ENCODE measurements at regions of chr6 and their contacts with region 1.

Region 1: GRCh38 chr6:4775584-4776494 is at the start of gene CDYL:
- DNase-seq: peak; percentile 82
- H3K4me3 ChIP-seq: peak within 1 kb of the TSS; percentile 51 to 90 (median 64)
- H3K27ac ChIP-seq: no peak within 1 kb of the TSS
- H3K4me1 ChIP-seq: peaks cover 12% of the 10 kb centered on the region
- H3K27me3 ChIP-seq: peaks cover 30 to 33% of the 10 kb centered on the region in 2 experiments
- CTCF ChIP-seq: peak in 1 of 2 donors; percentile 23
- POLR2A ChIP-seq: no peak
- total RNA-seq, gene CDYL: 34.1 and 35.6 TPM in 2 replicates

Region 2: DNA sequence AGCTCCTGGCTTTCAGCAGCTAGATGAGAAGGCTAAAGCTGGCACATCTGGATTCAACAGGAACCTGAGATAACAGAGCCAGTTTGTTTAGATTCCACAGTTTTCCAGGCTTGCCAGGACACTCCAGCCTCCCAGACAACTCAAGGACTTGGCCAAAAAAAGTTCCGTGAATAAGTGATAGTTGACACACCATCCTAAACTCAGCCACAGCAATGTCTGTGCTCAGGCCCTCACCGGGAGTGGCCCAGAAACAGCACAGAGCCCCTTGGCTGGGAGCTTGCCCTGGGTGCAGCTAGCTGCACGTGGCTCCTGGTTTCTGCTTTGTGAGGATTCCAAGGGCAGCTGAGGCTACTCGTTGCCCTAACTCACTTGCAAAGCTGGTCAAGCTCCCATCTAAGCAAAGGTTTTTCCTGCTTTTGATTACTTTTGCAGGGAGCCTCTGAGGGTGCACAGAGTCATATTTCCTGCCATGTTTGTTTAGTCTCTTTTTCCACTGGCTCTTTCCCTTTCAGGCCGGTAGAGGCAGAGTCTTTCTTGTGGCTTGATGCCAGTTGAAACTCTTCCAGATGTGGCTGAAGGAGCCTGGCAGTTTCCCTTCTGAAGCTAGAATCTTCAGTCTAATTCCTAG is 522.1 kb before region 1 on chr6:
- CTCF ChIA-PET with region 1: interaction called, 4 read pairs
- POLR2A ChIA-PET with region 1: no interaction called
- dilution Hi-C with region 1: no loop called
- intact Hi-C with region 1: loop called (anchors 2 kb)
- DNase-seq: peak; percentile 96
- H3K4me3 ChIP-seq: no peak overlapping the region
- H3K27ac ChIP-seq: peak overlapping the region; percentile 60
- H3K4me1 ChIP-seq: peaks cover 50% of the 10 kb centered on the region
- H3K27me3 ChIP-seq: no peaks in the 10 kb centered on the region
- CTCF ChIP-seq: peak; percentile 72 to 75
- POLR2A ChIP-seq: peak; percentile 25

Region 3: DNA sequence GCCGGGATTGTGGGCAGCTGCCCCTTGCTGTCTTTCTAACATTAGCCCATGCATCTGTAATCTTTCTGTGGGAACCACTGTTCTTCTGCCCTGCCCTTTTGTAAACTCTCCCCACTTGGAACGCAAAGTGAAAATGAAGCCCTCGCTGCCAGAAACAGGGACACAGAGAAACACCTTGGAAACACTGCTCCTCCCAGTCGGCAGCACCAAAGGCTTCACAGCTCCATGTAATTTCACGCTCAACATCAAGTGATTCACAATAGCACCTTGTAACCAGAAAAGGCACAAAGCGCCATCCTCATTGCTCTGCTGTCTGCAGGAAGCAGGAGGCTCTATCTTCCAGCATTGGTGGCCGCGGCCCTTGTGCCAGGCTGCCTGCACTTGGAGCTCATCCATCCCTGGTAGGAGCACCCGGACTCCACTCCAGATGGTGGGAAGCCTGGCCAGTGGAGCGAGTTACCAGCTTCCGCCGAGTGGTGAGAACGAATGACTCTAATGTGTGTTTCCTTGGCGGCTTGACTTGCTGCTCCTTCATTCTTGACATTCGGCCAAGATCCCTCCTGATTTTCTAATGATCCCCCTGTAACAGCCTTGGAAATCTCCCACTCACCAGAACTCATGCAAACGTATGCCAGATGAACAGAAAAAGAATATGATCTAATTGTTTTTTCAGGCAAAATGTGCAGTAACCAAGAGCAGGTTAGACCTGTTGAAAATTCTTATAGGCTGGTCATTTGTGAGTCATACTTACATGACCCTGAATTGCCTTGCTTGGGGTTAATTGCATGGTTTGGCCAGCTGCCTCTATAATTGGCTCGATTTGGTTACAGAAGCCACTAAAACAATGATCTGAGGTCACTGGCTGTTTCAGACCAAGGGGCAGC is 168.8 kb before region 1 on chr6:
- CTCF ChIA-PET with region 1: interaction called, 3 read pairs
- POLR2A ChIA-PET with region 1: no interaction called
- dilution Hi-C with region 1: no loop called
- intact Hi-C with region 1: loop called (anchors 1 kb)
- DNase-seq: peak; percentile 91
- H3K4me3 ChIP-seq: no peak overlapping the region
- H3K27ac ChIP-seq: peak overlapping the region; percentile 83
- H3K4me1 ChIP-seq: peaks cover 30% of the 10 kb centered on the region
- H3K27me3 ChIP-seq: no peaks in the 10 kb centered on the region
- CTCF ChIP-seq: no peak
- POLR2A ChIP-seq: no peak

Region 4: GRCh38 chr6:4732691-4733315 is 43.0 kb before region 1 on chr6:
- CTCF ChIA-PET with region 1: no interaction called
- POLR2A ChIA-PET with region 1: no interaction called
- dilution Hi-C with region 1: no loop called
- intact Hi-C with region 1: loop called (anchors 2 kb)
- DNase-seq: peak; percentile 85
- H3K4me3 ChIP-seq: peak overlapping the region in 1 of 3 experiments; percentile 1
- H3K27ac ChIP-seq: no peak overlapping the region
- H3K4me1 ChIP-seq: peaks cover 11% of the 10 kb centered on the region
- H3K27me3 ChIP-seq: peaks cover 5 to 8% of the 10 kb centered on the region in 2 experiments
- CTCF ChIP-seq: no peak
- POLR2A ChIP-seq: no peak

Region 5: GRCh38 chr6:4743062-4743461 is 32.8 kb before region 1 on chr6:
- CTCF ChIA-PET with region 1: no interaction called
- POLR2A ChIA-PET with region 1: no interaction called
- dilution Hi-C with region 1: no loop called
- intact Hi-C with region 1: no loop called
- DNase-seq: no peak
- H3K4me3 ChIP-seq: no peak overlapping the region
- H3K27ac ChIP-seq: no peak overlapping the region
- H3K4me1 ChIP-seq: no peaks in the 10 kb centered on the region
- H3K27me3 ChIP-seq: peaks cover 4 to 9% of the 10 kb centered on the region in 2 experiments
- CTCF ChIP-seq: no peak
- POLR2A ChIP-seq: no peak

Region 6: DNA sequence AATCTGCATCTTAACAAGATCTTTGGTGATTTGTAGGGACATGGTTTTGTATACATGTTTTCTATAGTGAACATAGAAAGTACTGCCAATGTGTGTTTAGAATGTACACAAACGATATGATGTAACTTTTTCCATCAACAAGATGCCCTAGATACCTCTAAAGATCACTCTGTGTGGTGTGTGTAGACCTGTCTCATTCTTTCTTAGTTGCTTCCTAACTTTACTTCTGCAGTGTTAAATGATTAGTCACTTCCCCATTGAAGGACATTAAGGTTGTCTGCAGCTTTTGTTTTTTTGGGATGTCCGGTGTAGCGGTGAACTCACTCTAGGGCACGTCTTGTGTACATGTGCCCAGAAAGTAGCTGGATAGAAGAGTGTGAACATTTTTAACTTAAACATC is 36.2 kb after region 1 on chr6:
- CTCF ChIA-PET with region 1: interaction called, 3 read pairs
- POLR2A ChIA-PET with region 1: interaction called, 4 read pairs
- dilution Hi-C with region 1: no loop called
- intact Hi-C with region 1: loop called (anchors 1 kb)
- DNase-seq: peak; percentile 92
- H3K4me3 ChIP-seq: no peak overlapping the region
- H3K27ac ChIP-seq: peak overlapping the region; percentile 95
- H3K4me1 ChIP-seq: peaks cover 33% of the 10 kb centered on the region
- H3K27me3 ChIP-seq: no peaks in the 10 kb centered on the region
- CTCF ChIP-seq: no peak
- POLR2A ChIP-seq: peak; percentile 46

Region 7: GRCh38 chr6:4936681-4937041 is 160.8 kb after region 1 on chr6:
- CTCF ChIA-PET with region 1: no interaction called
- POLR2A ChIA-PET with region 1: no interaction called
- dilution Hi-C with region 1: no loop called
- intact Hi-C with region 1: loop called (anchors 1 kb)
- DNase-seq: peak; percentile 67
- H3K4me3 ChIP-seq: no peak overlapping the region
- H3K27ac ChIP-seq: no peak overlapping the region
- H3K4me1 ChIP-seq: peaks cover under 1% of the 10 kb centered on the region
- H3K27me3 ChIP-seq: no peaks in the 10 kb centered on the region
- CTCF ChIP-seq: peak; percentile 41 to 59
- POLR2A ChIP-seq: no peak